Dorsolateral prefrontal cortex (tissue), 120 donors: ENCODE measurements at regions of chr3 and their contacts with region 1.

Region 1: GRCh38 chr3:52291508-52292181 is 4.0 kb downstream of the GLYCTK start:
- DNase-seq: peak in 3 of 10 donors; percentile 13 to 42 (median 28)
- H3K4me3 ChIP-seq: no peak overlapping the region
- H3K27ac ChIP-seq: no peak overlapping the region
- H3K27me3 ChIP-seq: no peaks in the 10 kb centered on the region
- CTCF ChIP-seq: peak in 50 of 56 donors; percentile 11 to 68 (median 44)

Region 2: GRCh38 chr3:52144034-52144795 is 147.4 kb before region 1 on chr3:
- intact Hi-C with region 1: no loop called
- DNase-seq: peak; percentile 82 to 93 (median 86)
- H3K4me3 ChIP-seq: no peak overlapping the region
- H3K27ac ChIP-seq: peak overlapping the region in 37 of 59 donors; percentile 7 to 91 (median 60)
- H3K27me3 ChIP-seq: no peaks in the 10 kb centered on the region
- CTCF ChIP-seq: peak; percentile 90 to 100 (median 99)

Region 3: DNA sequence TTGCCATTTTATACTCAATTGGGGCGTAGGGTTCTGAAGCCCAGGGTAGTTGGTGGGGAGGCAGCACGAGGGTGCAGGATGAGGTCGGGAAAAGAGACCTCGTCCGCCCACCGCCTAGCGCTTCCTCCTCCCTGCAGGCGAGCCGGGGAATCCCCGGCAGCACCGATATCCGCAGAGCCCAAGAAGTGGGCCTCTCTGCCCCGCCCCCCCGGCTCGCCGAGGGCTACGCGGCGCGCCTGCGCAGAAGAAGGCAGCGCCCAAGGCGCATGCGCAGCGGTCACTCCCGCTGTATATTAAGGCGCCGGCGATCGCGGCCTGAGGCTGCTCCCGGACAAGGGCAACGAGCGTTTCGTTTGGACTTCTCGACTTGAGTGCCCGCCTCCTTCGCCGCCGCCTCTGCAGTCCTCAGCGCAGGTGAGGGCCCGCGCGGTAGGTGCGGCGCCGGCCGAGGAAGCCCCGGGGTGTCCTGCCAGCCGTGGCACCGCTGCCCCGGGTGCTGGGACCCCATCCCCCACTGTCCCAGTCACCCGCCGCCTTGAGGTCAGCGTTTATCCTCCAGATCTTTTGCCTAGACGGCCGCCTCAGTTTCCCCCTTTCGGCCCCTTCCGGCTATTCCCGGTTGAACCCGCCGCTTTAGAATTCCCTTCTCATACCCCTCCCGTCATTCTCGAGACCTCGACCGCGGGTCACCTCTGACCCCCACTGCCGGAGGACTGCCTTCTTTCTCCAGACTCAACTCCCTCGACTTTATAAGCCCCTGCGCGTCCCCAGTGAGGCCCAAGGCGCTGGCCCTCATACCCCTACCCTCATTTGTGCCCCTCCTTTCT is 93.6 kb before region 1 on chr3 and contains the start of gene ALAS1:
- intact Hi-C with region 1: loop called in 1 of 2 experiments (anchors 5 kb)
- DNase-seq: peak; percentile 83 to 96 (median 84)
- H3K4me3 ChIP-seq: peak within 1 kb of the TSS; percentile 62 to 100 (median 97)
- H3K27ac ChIP-seq: peak within 1 kb of the TSS in 58 of 59 donors; percentile 75 to 96 (median 89)
- H3K27me3 ChIP-seq: no peaks in the 10 kb centered on the region
- CTCF ChIP-seq: peak in 39 of 56 donors; percentile 8 to 52 (median 31)
- total RNA-seq, gene ALAS1: 34.8 to 81.1 (median 55.4) TPM

Region 4: DNA sequence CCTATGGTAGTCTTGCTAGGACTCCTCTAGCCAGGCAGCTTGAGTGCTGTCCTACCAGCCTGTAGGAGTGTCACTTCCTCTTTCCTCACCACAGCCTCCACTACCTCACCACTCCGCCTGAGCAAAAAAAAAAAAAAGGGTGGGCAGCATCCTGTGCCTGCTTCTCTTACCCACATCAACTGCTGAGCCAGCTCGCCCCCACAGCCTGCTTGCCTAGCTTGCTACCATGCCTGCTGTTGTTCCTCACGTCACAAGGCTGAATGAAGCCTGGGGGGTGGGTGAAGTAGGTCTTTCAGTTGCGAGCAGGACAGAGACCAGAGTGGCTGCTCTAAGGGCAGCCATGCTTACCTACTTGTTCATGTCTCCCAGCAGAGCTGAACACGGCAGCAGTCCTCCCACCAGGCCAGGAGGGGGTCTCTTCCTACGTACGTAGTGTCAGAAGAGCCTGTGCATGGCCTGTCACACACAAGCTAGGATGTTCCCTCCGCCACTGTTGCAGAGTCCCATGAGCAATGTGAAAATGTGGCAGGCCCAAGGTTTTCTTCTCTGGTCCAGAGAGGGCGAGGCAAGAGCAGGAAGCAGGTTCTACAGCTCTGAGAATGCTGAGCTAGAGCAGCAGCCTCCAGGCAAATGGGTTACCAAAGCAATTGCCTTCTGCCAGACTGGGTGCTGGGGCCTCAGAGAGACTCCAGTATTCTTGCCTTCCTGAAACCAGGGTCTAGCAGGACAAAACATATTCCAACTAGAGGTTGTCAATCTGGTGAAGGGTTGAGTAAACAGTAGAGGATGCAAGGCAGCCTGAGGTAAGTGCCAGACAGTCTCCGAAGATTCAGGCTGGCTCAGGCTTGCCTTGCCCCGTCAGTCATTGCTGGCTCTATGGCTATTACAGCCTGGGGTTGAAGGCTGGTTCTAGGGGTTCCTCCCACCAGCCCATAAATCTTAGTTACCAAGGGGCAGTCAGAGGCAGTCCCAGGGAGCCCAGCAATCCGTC is 38.0 kb before region 1 on chr3:
- intact Hi-C with region 1: no loop called
- DNase-seq: peak in 7 of 10 donors; percentile 73 to 91 (median 82)
- H3K4me3 ChIP-seq: peak overlapping the region in 1 of 59 donors; percentile 12
- H3K27ac ChIP-seq: peak overlapping the region in 55 of 59 donors; percentile 13 to 87 (median 63)
- H3K27me3 ChIP-seq: no peaks in the 10 kb centered on the region
- CTCF ChIP-seq: no peak

Region 5: DNA sequence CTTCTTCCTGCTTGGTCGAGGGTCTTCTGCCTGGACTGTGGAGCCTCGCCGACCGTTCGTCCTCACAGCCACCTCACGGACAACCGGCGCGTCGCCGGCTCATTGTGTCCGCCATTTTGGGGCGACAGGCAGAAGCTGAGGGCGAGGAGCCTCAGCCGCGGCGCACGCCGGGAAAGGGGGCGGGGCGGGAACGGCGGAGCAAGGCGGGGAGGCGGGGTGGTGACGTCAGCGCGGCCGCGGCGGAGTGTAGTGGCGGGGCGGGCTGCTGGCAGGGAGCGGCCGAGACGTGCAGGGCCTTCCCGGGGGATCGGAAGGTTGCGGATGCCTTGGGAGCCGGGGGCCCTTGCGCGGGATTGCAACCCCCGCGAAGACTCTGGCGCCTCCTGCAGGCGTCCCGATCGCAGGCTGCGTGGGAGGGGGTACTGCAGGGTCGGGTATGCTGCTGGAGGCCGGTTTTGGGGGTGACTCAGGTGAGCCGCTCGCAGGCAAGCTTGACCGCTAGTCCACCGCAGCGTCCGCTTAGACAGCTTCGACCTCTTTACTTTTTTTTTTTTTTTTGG is 13.1 kb before region 1 on chr3 and contains the start of gene WDR82:
- intact Hi-C with region 1: loop called in 1 of 2 experiments (anchors 1 kb)
- DNase-seq: peak; percentile 91 to 99 (median 98)
- H3K4me3 ChIP-seq: peak within 1 kb of the TSS; percentile 70 to 99 (median 93)
- H3K27ac ChIP-seq: peak within 1 kb of the TSS; percentile 86 to 99 (median 96)
- H3K27me3 ChIP-seq: no peaks in the 10 kb centered on the region
- CTCF ChIP-seq: peak in 51 of 56 donors; percentile 24 to 69 (median 46)
- total RNA-seq, gene WDR82: 61.0 to 123 (median 91.2) TPM

Region 6: DNA sequence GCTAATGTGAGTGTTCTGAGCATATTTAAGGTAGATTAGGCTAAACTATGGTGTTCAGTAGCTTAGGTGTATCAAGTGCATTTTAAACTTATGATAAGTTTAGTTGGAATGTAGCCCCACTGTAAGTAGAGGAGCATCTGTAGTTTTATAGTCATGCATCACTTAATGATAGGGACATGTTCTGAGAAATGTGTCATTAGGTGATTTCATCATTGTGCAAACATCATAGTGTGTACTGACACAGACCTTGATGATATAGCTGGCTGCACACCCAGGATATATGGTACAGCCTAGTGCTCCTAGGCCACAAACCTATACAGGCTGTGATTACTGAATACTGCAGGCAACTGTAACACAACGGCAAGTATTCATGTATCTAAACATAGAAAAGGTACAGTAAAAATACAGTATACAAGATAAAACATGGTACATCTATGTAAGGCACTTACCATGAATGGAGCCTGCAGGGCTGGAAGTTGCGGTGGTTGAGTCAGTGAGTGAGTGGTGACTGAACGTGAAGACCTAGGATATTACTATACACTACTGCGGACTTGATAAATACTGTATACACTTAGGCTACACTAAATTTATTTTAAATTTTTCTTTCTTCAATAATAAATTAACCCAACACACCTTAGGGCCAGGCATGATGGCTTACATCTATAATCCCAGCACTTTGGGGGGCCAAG is 42.4 kb after region 1 on chr3:
- intact Hi-C with region 1: loop called in 1 of 2 experiments (anchors 5 kb)
- DNase-seq: no peak
- H3K4me3 ChIP-seq: no peak overlapping the region
- H3K27ac ChIP-seq: no peak overlapping the region
- H3K27me3 ChIP-seq: no peaks in the 10 kb centered on the region
- CTCF ChIP-seq: no peak

Region 7: DNA sequence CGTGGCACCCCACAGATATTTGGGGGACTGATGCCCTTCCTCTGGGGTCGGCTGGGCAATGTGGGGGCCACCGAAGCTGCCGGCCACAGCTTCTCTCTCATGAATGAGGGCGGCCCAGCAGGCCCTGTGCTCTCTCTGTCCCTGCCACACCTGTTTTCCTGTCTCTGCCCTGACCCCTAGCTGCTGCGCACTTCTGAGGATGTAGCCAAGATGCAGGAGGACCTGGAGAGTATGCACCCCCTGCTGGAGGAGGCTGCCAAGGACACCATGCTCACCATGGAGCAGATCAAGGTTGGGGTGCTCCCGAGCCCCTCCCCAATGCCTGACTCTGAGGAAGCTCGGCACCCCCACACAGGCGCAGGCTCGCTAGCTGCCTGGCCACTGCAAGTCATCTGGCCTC is 93.5 kb after region 1 on chr3:
- intact Hi-C with region 1: loop called in 1 of 2 experiments (anchors 10 kb)
- DNase-seq: no peak
- H3K4me3 ChIP-seq: no peak overlapping the region
- H3K27ac ChIP-seq: no peak overlapping the region
- H3K27me3 ChIP-seq: no peaks in the 10 kb centered on the region
- CTCF ChIP-seq: peak in 21 of 56 donors; percentile 13 to 39 (median 23)

Region 8: GRCh38 chr3:52406231-52406661 is 114.6 kb after region 1 on chr3:
- intact Hi-C with region 1: loop called in 1 of 2 experiments (anchors 5 kb)
- DNase-seq: peak in 2 of 10 donors; percentile 26 to 31
- H3K4me3 ChIP-seq: no peak overlapping the region
- H3K27ac ChIP-seq: no peak overlapping the region
- H3K27me3 ChIP-seq: no peaks in the 10 kb centered on the region
- CTCF ChIP-seq: no peak

Region 9: DNA sequence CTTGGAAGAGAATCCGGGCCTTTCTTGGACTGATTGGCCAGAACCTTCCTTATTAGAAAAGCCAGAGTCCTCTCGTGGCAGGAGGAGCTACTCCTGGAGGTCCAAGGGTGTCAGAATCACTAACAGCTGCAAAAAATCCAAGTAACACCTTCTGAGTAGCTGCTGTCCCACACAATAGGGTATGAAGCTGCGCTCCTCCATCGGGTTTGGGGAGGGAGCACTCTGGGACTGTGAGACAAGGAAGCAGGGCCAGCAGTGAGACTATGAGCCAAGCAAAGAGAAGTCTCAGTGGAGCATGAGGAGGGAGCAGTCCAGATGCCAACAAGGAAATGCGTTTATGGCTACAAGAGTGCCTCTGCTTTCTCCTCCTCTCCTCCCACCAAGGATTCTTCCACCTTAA is 131.5 kb after region 1 on chr3:
- intact Hi-C with region 1: no loop called
- DNase-seq: peak in 1 of 10 donors; percentile 3
- H3K4me3 ChIP-seq: no peak overlapping the region
- H3K27ac ChIP-seq: no peak overlapping the region
- H3K27me3 ChIP-seq: no peaks in the 10 kb centered on the region
- CTCF ChIP-seq: no peak

Region 10: GRCh38 chr3:52444860-52445793 is 153.5 kb after region 1 on chr3 and contains the start of gene SEMA3G:
- intact Hi-C with region 1: loop called in 1 of 2 experiments (anchors 5 kb)
- DNase-seq: peak in 1 of 10 donors; percentile 94
- H3K4me3 ChIP-seq: peak within 1 kb of the TSS in 25 of 59 donors; percentile 8 to 50 (median 35)
- H3K27ac ChIP-seq: peak within 1 kb of the TSS in 2 of 59 donors; percentile 18 to 64
- H3K27me3 ChIP-seq: no peaks in the 10 kb centered on the region
- CTCF ChIP-seq: peak in 40 of 56 donors; percentile 11 to 47 (median 26)
- total RNA-seq, gene SEMA3G: 1.6 to 23.6 (median 7.0) TPM